ENCODE measurements at regions of chrX and their contacts with region 1.

Region 1: DNA sequence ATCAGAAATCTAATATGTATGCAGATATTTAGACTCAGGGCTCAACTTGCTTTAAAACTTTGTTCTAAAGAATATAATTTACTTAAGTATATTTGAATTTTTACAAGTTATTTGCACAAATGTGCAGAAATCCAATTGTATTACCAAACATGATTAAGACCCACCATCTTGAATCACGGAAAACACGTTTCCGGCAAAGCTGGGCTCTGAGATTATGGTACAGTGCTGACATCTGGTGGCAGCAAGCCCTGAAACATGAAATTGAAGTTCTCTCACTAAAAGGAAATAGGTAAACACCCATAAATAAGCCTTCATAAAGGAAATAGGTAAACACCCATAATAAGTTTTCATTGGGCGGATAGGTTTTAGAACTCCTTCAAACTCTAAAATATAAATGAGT is 98.3 kb upstream of the MAOA start:
- DNase-seq: peak; percentile 27 to 58 (median 38)
- H3K4me3 ChIP-seq: no peak overlapping the region
- H3K4me3 Mint-ChIP-seq: no peak overlapping the region
- H3K27ac ChIP-seq: no peak overlapping the region
- H3K27ac Mint-ChIP-seq: no peak overlapping the region
- H3K4me1 ChIP-seq: peaks cover 0 to 4% of the 10 kb centered on the region in 2 donors
- H3K4me1 Mint-ChIP-seq: peaks cover 4% of the 10 kb centered on the region
- H3K27me3 ChIP-seq: no peaks in the 10 kb centered on the region
- H3K27me3 Mint-ChIP-seq: peaks cover 0 to 16% (median 0%) of the 10 kb centered on the region in 3 donors
- CTCF ChIP-seq: peak; percentile 64

Region 2: GRCh38 chrX:41796577-41796976 is 1761.2 kb before region 1 on chrX:
- intact Hi-C with region 1: loop called in 1 of 2 experiments (anchors 10 kb)
- DNase-seq: no peak
- H3K4me3 ChIP-seq: no peak overlapping the region
- H3K4me3 Mint-ChIP-seq: no peak overlapping the region
- H3K27ac ChIP-seq: no peak overlapping the region
- H3K27ac Mint-ChIP-seq: no peak overlapping the region
- H3K4me1 ChIP-seq: no peaks in the 10 kb centered on the region
- H3K4me1 Mint-ChIP-seq: peaks cover 14% of the 10 kb centered on the region
- H3K27me3 ChIP-seq: no peaks in the 10 kb centered on the region
- H3K27me3 Mint-ChIP-seq: no peaks in the 10 kb centered on the region
- CTCF ChIP-seq: no peak

Region 3: DNA sequence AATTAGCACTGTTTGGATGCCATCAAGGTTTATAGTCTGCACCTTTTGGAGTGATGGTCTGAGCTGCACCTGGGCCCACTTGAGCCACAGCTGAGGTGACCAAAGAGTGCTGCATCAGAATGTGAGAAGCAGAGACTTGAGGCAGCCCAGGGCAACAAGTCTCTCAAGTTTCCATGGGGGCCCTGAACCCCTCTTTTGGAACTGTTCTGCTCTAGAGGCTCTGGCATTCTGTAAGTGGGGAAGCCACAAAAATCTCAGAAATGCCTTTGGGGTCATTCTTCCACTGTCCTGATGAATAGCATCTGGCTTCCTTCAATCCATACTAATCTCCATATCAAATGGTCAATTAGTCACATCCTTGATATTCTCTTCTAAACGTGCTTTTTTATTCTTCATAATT is 200.1 kb before region 1 on chrX:
- intact Hi-C with region 1: loop called in 1 of 2 experiments (anchors 10 kb)
- DNase-seq: no peak
- H3K4me3 ChIP-seq: no peak overlapping the region
- H3K4me3 Mint-ChIP-seq: no peak overlapping the region
- H3K27ac ChIP-seq: no peak overlapping the region
- H3K27ac Mint-ChIP-seq: no peak overlapping the region
- H3K4me1 ChIP-seq: no peaks in the 10 kb centered on the region
- H3K4me1 Mint-ChIP-seq: no peaks in the 10 kb centered on the region
- H3K27me3 ChIP-seq: peaks cover 0 to 2% of the 10 kb centered on the region in 2 donors
- H3K27me3 Mint-ChIP-seq: no peaks in the 10 kb centered on the region
- CTCF ChIP-seq: no peak

Region 4: DNA sequence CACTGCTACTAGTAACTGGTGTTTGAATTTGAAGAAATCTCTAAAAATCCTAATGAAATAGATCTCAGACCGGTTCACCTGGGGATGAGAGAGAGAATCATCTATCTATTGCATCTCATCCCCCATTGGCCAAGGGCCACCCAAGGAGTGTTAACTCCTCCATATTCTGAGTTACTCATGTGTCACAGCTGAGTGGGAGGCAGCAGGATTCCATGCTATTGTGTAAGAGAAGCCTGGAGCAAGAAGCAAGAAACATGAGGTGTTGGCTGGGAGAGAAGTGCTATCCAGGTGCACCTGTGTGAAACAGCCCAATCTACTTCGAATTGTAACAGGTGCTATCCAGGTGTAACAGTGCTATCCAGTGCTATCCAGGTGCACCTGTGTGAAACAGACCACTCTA is 52.0 kb before region 1 on chrX:
- intact Hi-C with region 1: no loop called
- DNase-seq: no peak
- H3K4me3 ChIP-seq: no peak overlapping the region
- H3K4me3 Mint-ChIP-seq: no peak overlapping the region
- H3K27ac ChIP-seq: no peak overlapping the region
- H3K27ac Mint-ChIP-seq: no peak overlapping the region
- H3K4me1 ChIP-seq: no peaks in the 10 kb centered on the region
- H3K4me1 Mint-ChIP-seq: peaks cover 5% of the 10 kb centered on the region
- H3K27me3 ChIP-seq: no peaks in the 10 kb centered on the region
- H3K27me3 Mint-ChIP-seq: peaks cover 0 to 6% (median 5%) of the 10 kb centered on the region in 3 donors
- CTCF ChIP-seq: no peak

Region 5: DNA sequence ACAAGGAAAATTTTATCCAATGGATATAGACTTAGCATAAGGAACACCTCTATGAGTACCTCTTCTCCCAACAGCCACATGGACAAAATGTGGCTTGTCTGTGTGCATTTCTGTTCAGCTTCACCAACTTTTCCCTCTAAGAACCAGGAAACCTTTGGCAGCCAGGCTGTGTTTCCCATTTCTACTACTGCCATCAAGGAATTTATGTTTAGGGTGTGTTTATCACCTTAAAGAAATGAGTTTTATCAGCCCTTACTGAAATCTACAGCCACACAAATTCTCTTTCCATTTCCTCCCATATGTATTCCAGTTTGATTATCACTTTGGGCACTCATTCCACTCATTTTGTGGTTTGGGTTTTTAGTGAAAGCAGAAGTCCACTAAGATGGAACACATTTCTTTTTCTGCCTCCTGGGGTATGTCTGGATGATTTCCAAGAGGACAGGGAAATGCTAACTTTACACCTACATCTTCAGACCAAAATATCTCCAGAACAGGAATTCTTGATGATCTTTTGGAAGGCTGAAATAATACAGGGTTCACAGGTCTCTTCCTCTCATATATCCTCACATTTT is 15.7 kb after region 1 on chrX:
- intact Hi-C with region 1: no loop called
- DNase-seq: no peak
- H3K4me3 ChIP-seq: no peak overlapping the region
- H3K4me3 Mint-ChIP-seq: no peak overlapping the region
- H3K27ac ChIP-seq: no peak overlapping the region
- H3K27ac Mint-ChIP-seq: no peak overlapping the region
- H3K4me1 ChIP-seq: no peaks in the 10 kb centered on the region
- H3K4me1 Mint-ChIP-seq: no peaks in the 10 kb centered on the region
- H3K27me3 ChIP-seq: no peaks in the 10 kb centered on the region
- H3K27me3 Mint-ChIP-seq: peaks cover 0 to 8% (median 0%) of the 10 kb centered on the region in 3 donors
- CTCF ChIP-seq: no peak

Region 6: GRCh38 chrX:43750248-43750676 is 192.5 kb after region 1 on chrX:
- intact Hi-C with region 1: loop called in 1 of 2 experiments (anchors 2 kb)
- DNase-seq: peak; percentile 72 to 85 (median 82)
- H3K4me3 ChIP-seq: peak overlapping the region in 1 of 3 experiments; percentile 6
- H3K4me3 Mint-ChIP-seq: no peak overlapping the region
- H3K27ac ChIP-seq: peak overlapping the region in 1 of 2 donors; percentile 60
- H3K27ac Mint-ChIP-seq: peak overlapping the region; percentile 62 to 87 (median 80)
- H3K4me1 ChIP-seq: peaks cover 17 to 21% of the 10 kb centered on the region in 2 donors
- H3K4me1 Mint-ChIP-seq: peaks cover 15% of the 10 kb centered on the region
- H3K27me3 ChIP-seq: peaks cover 0 to 4% of the 10 kb centered on the region in 2 donors
- H3K27me3 Mint-ChIP-seq: peaks cover 0 to 2% (median under 1%) of the 10 kb centered on the region in 3 donors
- CTCF ChIP-seq: peak; percentile 45

Region 7: GRCh38 chrX:44017676-44018075 is 459.9 kb after region 1 on chrX:
- intact Hi-C with region 1: no loop called
- DNase-seq: no peak
- H3K4me3 ChIP-seq: no peak overlapping the region
- H3K4me3 Mint-ChIP-seq: no peak overlapping the region
- H3K27ac ChIP-seq: no peak overlapping the region
- H3K27ac Mint-ChIP-seq: no peak overlapping the region
- H3K4me1 ChIP-seq: peaks cover 13 to 18% of the 10 kb centered on the region in 2 donors
- H3K4me1 Mint-ChIP-seq: peaks cover 14% of the 10 kb centered on the region
- H3K27me3 ChIP-seq: no peaks in the 10 kb centered on the region
- H3K27me3 Mint-ChIP-seq: peaks cover 0 to 6% (median 0%) of the 10 kb centered on the region in 3 donors
- CTCF ChIP-seq: no peak

Region 8: DNA sequence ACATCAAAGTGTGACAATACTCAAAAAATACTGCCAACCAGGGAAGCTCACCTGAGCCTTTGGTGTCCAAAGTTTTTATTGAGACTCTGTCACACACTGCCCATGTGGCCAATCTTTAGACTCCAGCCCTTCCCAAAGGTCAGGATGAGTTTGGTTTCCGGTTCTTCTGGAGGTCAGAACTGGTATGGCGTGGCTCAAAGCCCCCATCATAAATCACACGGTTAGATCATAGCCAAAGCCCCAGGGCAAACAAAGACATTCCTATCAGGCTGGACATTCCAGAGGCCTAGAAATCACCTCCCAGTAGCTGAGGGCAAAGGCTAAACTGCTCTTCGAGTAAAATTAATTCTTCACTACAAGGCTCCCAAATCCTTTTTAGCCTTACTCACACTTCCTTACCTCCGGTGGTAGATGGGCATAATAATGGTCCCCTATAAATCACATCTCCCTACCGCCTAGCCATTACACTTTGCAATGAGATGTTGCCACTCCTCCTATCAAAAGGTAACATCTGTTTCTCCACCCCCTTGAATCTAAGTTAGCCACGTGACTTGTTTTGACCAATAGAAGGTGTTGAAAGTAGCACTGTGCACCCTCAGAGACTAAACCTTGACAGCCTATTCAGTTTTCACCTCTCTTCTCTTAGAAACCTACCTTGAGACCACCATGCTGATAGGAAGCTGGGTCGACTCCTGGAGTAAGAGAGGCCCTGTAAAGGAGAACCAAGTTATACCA is 1148.2 kb after region 1 on chrX:
- intact Hi-C with region 1: no loop called
- DNase-seq: no peak
- H3K4me3 ChIP-seq: no peak overlapping the region
- H3K4me3 Mint-ChIP-seq: no peak overlapping the region
- H3K27ac ChIP-seq: no peak overlapping the region
- H3K27ac Mint-ChIP-seq: no peak overlapping the region
- H3K4me1 ChIP-seq: no peaks in the 10 kb centered on the region
- H3K4me1 Mint-ChIP-seq: peaks cover 4% of the 10 kb centered on the region
- H3K27me3 ChIP-seq: no peaks in the 10 kb centered on the region
- H3K27me3 Mint-ChIP-seq: peaks cover 0 to 9% (median 2%) of the 10 kb centered on the region in 3 donors
- CTCF ChIP-seq: no peak